HCT116 (cell line): ENCODE measurements at regions of chr6 and their contacts with region 1.

Region 1: GRCh38 chr6:70304616-70305015 is 1.7 kb upstream of the COL9A1 start:
- DNase-seq: no peak
- ATAC-seq: no peak
- H3K4me3 ChIP-seq: no peak overlapping the region
- H3K27ac ChIP-seq: no peak overlapping the region
- H3K4me1 ChIP-seq: no peaks in the 10 kb centered on the region
- H3K27me3 ChIP-seq: peaks cover 64% of the 10 kb centered on the region
- CTCF ChIP-seq: no peak
- POLR2A ChIP-seq: no peak
- RAD21 ChIP-seq: no peak

Region 2: GRCh38 chr6:70234561-70235236 is 69.9 kb before region 1 on chr6:
- CTCF ChIA-PET with region 1: no interaction called
- POLR2A ChIA-PET with region 1: no interaction called
- RAD21 ChIA-PET with region 1: no interaction called
- intact Hi-C with region 1: no loop called
- DNase-seq: no peak
- ATAC-seq: no peak
- H3K4me3 ChIP-seq: no peak overlapping the region
- H3K27ac ChIP-seq: no peak overlapping the region
- H3K4me1 ChIP-seq: no peaks in the 10 kb centered on the region
- H3K27me3 ChIP-seq: peaks cover 53% of the 10 kb centered on the region
- CTCF ChIP-seq: no peak
- POLR2A ChIP-seq: no peak
- RAD21 ChIP-seq: no peak

Region 3: DNA sequence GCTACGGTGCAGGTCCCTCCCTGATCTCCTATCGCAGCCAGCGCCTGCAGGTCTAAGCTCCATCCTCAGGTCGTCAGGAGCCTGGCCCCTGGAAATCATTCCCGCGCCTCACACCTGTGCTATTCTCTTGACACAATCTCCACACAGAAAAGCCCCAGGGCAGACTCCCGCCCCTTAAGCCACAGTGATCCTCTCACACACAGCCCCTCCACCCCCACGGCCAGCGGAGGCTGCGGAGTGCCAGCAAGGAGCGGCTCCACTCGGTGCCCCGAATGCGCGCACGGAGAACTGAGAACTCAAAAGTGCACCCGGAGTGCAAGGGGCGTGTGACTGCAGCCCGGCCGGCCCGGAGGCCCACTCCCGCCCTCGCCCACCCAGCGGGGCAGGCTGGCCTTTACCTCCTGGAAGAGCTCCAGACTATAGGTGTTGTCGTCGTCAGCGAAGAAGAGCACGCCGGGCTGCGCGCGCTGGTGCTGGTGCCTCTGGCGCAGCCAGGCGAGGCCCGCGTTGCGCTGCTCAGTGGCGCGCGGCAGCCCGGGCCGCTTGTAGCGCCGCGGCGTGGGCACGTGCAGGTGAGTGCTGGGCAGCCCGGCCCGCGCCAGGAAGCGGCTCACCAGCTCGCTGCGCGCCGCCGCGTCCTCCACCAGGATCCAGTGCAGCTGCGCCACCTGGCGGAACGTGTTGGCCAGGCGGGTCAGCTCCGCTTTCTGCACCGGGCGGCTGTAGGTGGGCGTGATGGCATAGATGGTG is 651.0 kb after region 1 on chr6:
- CTCF ChIA-PET with region 1: interaction called, 16 read pairs
- POLR2A ChIA-PET with region 1: no interaction called
- RAD21 ChIA-PET with region 1: no interaction called
- intact Hi-C with region 1: loop called (anchors 10 kb)
- DNase-seq: peak; percentile 60
- ATAC-seq: peak; percentile 100
- H3K4me3 ChIP-seq: no peak overlapping the region
- H3K27ac ChIP-seq: no peak overlapping the region
- H3K4me1 ChIP-seq: peaks cover 3 to 5% of the 10 kb centered on the region in 2 experiments; a peak in 2 of 4 replicates
- H3K27me3 ChIP-seq: peaks cover 21% of the 10 kb centered on the region; the same call in 1 of the 2 replicates
- CTCF ChIP-seq: peak; percentile 63 to 85 (median 78)
- POLR2A ChIP-seq: no peak
- RAD21 ChIP-seq: peak; percentile 77